Testis (tissue), 5 donors: ENCODE measurements at regions of chr14 and their contacts with region 1.

Region 1: DNA sequence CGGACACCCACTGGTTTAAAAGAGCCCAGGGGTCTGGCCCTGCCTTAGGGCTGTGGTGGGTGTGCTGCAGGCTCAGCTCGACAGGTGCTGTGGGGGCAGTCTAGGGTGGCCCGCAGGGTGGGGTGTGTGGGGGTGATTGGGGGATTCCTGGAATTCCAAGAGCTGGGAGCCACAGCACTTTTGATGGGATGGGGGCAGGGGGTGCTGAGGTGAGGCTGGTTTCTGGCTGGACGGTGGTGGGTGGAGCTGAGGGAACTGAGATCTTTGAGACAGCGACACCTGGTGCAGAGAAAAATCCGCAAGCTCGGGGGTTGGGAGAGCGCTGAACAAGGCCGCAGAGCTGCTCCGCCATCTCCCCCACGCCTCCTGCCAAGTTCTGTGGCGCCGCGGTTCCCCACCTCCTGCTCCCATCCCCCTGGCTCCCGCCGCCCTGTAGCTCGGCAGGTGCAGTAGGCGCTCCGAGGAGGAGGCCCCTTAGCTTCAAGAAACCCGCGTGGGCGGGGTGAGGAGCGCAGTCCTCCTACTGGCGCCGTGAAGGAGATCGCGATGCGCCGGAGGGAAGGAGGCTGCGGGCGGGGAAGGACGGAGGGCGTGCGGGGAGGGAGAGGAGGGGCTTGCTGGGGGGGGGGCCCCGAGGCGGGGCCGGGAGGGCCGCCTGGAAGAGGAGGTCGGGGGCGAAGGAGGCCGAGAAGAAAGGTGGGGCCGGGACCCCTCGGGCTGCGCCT is 1.3 kb upstream of the TEDC1 start:
- DNase-seq: peak; percentile 90
- H3K4me3 ChIP-seq: peak overlapping the region; percentile 68 to 76
- H3K27ac ChIP-seq: peak overlapping the region; percentile 79 to 90
- H3K4me1 ChIP-seq: peaks cover 25% of the 10 kb centered on the region
- H3K27me3 ChIP-seq: no peaks in the 10 kb centered on the region
- CTCF ChIP-seq: peak; percentile 38 to 64 (median 51)
- POLR2A ChIP-seq: no peak

Region 2: GRCh38 chr14:105229099-105229655 is 260.5 kb before region 1 on chr14:
- intact Hi-C with region 1: no loop called
- DNase-seq: no peak
- H3K4me3 ChIP-seq: no peak overlapping the region
- H3K27ac ChIP-seq: no peak overlapping the region
- H3K4me1 ChIP-seq: no peaks in the 10 kb centered on the region
- H3K27me3 ChIP-seq: no peaks in the 10 kb centered on the region
- CTCF ChIP-seq: no peak
- POLR2A ChIP-seq: no peak

Region 3: GRCh38 chr14:105374383-105374782 is 115.3 kb before region 1 on chr14:
- intact Hi-C with region 1: loop called (anchors 5 kb)
- DNase-seq: no peak
- H3K4me3 ChIP-seq: no peak overlapping the region
- H3K27ac ChIP-seq: no peak overlapping the region
- H3K4me1 ChIP-seq: no peaks in the 10 kb centered on the region
- H3K27me3 ChIP-seq: no peaks in the 10 kb centered on the region
- CTCF ChIP-seq: no peak
- POLR2A ChIP-seq: no peak